Activated T-helper 2 cell treated with anti-CD3 and anti-CD28 coated beads, Interferon-gamma antibody, Interleukin-2, Interleukin-4, amounts not matched to agents 10 μg/mL and 5 μg/mL and 100 μg/mL, durations not matched to agents 14 hours and 24 hours and 36 hours (primary cell): ENCODE measurements at regions of chr7 and their contacts with region 1.

Region 1: DNA sequence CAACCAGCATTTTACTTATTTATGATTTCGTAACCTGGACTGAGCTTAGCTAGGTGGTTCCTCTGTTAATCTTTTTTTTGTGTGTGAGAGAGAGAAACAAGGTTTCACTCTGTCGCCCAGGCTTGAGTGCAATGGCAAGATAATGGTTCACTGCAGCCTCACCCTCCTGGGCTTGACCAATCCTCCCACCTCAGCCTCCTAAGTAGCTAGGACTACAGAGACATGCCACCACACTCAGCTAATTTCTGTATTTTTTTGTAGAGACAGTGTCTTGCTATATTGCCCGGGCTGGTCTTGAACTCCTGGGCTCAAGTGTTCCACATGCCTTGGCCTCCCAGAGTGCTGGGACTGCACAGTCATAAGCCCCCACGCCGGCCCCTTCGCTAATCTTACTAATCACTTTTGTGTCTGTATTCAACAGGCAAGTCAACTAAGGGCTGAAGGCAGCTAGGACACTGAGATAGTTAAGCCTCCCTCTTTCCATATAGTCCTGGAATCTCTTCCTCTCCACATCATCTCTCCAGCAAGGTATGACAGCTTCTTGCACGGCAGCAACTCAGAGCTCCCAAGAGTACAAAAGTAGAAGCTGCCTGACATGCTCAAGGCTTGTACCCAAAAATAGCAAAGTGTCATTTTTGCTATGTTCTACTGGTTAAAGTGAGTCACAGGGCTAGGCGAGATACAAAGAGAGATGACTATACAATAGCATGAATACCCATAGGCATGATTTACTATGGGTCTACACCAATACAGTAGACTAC is 11.3 kb downstream of the KMT2C start:
- DNase-seq: no peak
- H3K4me3 Mint-ChIP-seq: no peak overlapping the region
- H3K27ac Mint-ChIP-seq: peak overlapping the region; percentile 78
- H3K4me1 Mint-ChIP-seq: peaks cover 35% of the 10 kb centered on the region
- H3K27me3 Mint-ChIP-seq: no peaks in the 10 kb centered on the region

Region 2: GRCh38 chr7:152370297-152370696 is 54.2 kb before region 1 on chr7:
- intact Hi-C with region 1: loop called (anchors 10 kb)
- DNase-seq: no peak
- H3K4me3 Mint-ChIP-seq: no peak overlapping the region
- H3K27ac Mint-ChIP-seq: no peak overlapping the region
- H3K4me1 Mint-ChIP-seq: peaks cover 15% of the 10 kb centered on the region
- H3K27me3 Mint-ChIP-seq: no peaks in the 10 kb centered on the region

Region 3: DNA sequence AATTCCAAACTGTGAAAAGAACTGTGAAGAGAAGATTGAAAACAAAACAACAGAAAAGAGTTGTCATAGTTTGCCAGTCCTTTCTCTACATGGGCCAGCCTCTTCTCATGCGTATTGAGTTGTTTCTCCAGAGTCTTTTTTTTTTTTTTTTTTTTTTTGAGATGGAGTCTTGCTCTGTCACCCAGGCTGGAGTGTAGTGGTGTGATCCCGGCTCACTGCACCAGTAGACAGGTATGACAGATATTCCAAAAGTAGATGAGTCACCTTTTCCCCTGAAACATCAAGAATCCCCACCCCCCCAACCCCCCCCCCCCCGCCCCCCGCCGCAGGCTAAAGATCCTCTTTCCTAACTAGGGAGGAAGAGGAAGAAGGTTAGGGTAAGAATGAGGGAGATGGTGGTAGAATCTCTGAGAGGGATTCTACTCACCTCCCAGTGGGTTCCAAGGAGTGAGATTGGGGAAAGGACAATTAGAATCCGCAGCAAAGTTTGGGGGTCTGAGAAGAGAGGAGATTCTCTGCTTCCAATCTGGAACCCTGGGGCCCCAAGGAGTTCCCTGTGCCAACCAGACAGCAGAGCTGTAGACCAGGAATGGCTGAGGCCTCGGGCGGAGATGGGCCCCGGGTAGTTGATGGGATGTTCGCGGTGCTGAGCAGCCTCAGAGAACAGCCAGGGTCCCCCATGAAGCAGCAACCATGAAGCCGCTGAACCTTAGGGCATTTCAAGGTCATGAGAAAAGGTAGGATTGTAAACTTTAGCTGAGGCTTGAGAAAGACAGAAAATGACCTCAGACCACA is 27.0 kb after region 1 on chr7:
- intact Hi-C with region 1: no loop called
- DNase-seq: no peak
- H3K4me3 Mint-ChIP-seq: no peak overlapping the region
- H3K27ac Mint-ChIP-seq: no peak overlapping the region
- H3K4me1 Mint-ChIP-seq: no peaks in the 10 kb centered on the region
- H3K27me3 Mint-ChIP-seq: no peaks in the 10 kb centered on the region